ENCODE measurements at regions of chr6 and their contacts with region 1.

Region 1: GRCh38 chr6:20706243-20706938 is 172.1 kb downstream of the CDKAL1 start:
- DNase-seq: no peak
- ATAC-seq: no peak
- H3K4me3 ChIP-seq: no peak overlapping the region
- H3K4me3 Mint-ChIP-seq: no peak overlapping the region
- H3K27ac ChIP-seq: no peak overlapping the region
- H3K27ac Mint-ChIP-seq: no peak overlapping the region
- H3K4me1 ChIP-seq: no peaks in the 10 kb centered on the region
- H3K4me1 Mint-ChIP-seq: peaks cover 56 to 81% (median 65%) of the 10 kb centered on the region in 3 donors
- H3K27me3 ChIP-seq: no peaks in the 10 kb centered on the region
- H3K27me3 Mint-ChIP-seq: no peaks in the 10 kb centered on the region

Region 2: DNA sequence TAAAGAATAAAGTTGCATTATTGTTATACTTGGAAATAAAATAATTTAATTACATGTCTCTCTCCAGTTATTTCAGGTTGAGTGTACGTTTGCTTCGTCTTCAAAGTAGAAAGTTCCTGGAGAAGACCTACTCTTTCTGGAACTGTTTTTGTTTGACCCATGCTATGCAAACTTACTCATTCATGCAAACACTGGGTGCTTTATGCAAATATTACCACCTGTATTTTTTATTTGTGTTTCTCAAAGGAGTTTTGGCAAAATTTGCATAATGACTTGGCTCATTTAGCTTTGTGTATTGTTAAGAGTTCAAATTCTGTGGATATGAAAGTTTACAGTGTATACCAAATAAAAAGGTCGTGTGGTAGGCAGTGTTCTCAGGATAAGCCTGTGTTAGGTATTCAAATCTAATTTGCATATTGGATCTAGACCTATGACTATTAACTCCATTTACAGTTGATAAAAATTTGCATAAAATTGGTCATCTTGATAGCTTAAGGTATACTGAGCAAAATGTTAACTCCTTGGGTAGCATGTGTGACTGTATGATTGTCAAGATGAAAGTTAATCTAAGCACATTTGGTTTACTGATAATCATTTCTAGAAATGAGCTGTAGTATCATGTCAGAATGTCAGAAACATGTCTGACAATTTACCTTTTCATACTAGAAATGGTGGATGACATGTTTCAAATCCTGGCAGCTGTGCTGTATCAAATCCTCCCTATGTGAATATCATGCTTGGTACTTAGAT is 106.9 kb before region 1 on chr6:
- CTCF ChIA-PET with region 1: no interaction called
- POLR2A ChIA-PET with region 1: no interaction called
- DNase-seq: no peak
- ATAC-seq: no peak
- H3K4me3 ChIP-seq: no peak overlapping the region
- H3K4me3 Mint-ChIP-seq: no peak overlapping the region
- H3K27ac ChIP-seq: no peak overlapping the region
- H3K27ac Mint-ChIP-seq: no peak overlapping the region
- H3K4me1 ChIP-seq: no peaks in the 10 kb centered on the region
- H3K4me1 Mint-ChIP-seq: peaks cover 0 to 8% (median 0%) of the 10 kb centered on the region in 3 donors
- H3K27me3 ChIP-seq: no peaks in the 10 kb centered on the region
- H3K27me3 Mint-ChIP-seq: no peaks in the 10 kb centered on the region

Region 3: GRCh38 chr6:20965915-20966314 is 259.5 kb after region 1 on chr6:
- CTCF ChIA-PET with region 1: no interaction called
- POLR2A ChIA-PET with region 1: interaction called in 1 of 2 experiments, 13 read pairs
- DNase-seq: no peak
- ATAC-seq: no peak
- H3K4me3 ChIP-seq: no peak overlapping the region
- H3K4me3 Mint-ChIP-seq: no peak overlapping the region
- H3K27ac ChIP-seq: no peak overlapping the region
- H3K27ac Mint-ChIP-seq: no peak overlapping the region
- H3K4me1 ChIP-seq: no peaks in the 10 kb centered on the region
- H3K4me1 Mint-ChIP-seq: no peaks in the 10 kb centered on the region
- H3K27me3 ChIP-seq: no peaks in the 10 kb centered on the region
- H3K27me3 Mint-ChIP-seq: no peaks in the 10 kb centered on the region